Aorta (tissue), 5 donors: ENCODE measurements at regions of chr15 and their contacts with region 1.

Region 1: GRCh38 chr15:70701891-70702568 is 61.3 kb downstream of the UACA start:
- DNase-seq: no peak
- ATAC-seq: peak; percentile 67
- H3K4me3 ChIP-seq: peak overlapping the region; percentile 57 to 93
- H3K27ac ChIP-seq: peak overlapping the region in 1 of 2 donors; percentile 67
- H3K4me1 ChIP-seq: peaks cover 0 to 2% of the 10 kb centered on the region in 2 donors
- H3K27me3 ChIP-seq: no peaks in the 10 kb centered on the region

Region 2: DNA sequence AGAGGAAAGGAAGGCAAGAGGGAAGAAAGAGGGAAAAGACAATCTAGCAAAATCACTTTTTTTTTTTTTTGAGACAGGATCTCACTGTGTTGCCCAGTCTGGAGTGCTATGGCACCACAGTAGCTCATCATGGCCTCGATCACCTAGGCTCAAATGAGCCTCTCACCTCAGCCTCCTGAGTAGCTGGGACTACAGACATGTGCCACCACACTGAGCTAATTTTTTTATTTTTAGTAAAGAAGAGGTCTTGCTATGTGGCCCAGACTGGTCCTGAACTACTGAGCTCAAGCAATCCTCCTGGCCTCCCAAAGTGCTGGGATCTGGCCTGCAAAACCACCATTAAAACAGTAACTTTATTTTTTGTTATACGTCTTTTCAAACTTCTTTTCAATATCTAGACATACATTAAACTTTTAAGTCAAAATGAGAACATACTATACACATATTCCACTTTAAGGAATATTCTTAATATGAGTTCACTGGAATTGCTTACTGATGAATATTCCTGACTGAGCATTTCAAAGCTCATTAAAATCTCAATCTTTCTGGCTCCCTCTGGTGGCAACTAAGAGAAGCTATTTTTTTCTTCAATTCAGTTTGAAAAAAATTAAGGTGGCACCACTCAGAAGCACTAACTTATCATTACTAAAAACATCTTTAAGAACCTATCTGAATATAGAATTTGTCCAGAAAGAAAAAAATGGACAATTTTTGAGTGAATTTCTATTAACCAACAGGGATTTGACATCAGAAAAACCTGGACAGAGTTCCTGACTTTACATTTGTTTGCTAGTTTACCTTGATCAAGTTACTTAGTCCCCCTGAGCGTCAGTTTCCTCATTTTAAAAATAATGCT is 20.5 kb after region 1 on chr15:
- intact Hi-C with region 1: loop called in 1 of 2 experiments (anchors 2 kb)
- DNase-seq: no peak
- ATAC-seq: peak; percentile 60
- H3K4me3 ChIP-seq: no peak overlapping the region
- H3K27ac ChIP-seq: no peak overlapping the region
- H3K4me1 ChIP-seq: peaks cover under 1 to 3% of the 10 kb centered on the region in 2 donors
- H3K27me3 ChIP-seq: no peaks in the 10 kb centered on the region

Region 3: DNA sequence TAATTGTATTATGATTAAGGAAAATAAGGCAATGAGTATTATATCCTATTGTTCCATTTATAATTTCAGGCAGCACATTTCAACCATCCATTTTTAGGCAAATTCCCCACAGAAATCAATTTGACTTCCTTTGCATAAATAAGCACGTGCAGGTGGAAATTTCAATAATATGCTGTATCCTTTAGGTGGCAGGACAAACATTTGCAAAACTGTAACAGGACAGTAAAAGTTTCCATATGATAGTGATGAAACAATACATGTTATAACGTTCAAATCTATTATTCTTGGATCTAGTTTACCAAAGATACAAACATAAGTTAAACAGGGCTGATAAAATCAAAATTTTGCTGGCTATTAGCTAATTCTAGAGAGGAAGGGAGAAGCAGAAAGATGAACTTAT is 52.8 kb after region 1 on chr15:
- intact Hi-C with region 1: no loop called
- DNase-seq: no peak
- ATAC-seq: no peak
- H3K4me3 ChIP-seq: no peak overlapping the region
- H3K27ac ChIP-seq: no peak overlapping the region
- H3K4me1 ChIP-seq: peaks cover 2 to 5% of the 10 kb centered on the region in 2 donors
- H3K27me3 ChIP-seq: no peaks in the 10 kb centered on the region

Region 4: DNA sequence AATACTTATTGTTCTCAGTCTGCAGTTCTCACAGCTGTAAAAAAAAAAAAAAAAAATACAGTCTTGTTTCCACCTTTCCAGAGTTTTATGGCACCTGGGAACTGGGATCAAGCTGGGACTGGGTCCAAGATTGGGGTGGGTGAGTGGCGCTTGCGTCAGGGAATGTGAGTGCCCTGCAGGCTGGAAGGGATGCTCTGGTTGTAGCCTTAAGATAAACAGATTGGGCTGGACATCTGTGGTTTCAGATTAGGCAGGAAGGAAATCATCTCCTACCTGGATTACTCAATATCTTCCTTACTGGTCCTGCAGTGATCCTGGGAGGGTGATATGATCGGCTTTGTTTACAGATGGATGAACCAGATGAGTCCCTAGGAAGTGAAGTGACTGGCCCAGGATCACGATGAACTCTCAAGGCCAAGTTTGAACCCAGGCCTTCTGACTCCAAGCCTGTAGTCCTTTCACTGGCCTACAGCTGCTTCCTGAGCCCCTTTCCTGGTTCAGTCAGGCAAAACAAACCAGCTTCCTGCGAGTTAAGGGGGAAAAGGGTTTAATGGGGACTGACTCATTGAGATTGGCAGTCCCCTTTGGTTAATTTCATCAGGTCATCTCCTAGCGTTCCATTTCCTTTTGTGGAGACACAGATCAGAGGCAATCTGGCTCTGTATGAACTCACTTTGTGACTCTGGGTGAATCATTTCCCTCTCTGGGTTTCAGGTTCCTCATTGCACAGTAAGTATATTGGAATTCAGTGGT is 593.0 kb after region 1 on chr15:
- intact Hi-C with region 1: no loop called
- DNase-seq: no peak
- ATAC-seq: peak; percentile 50
- H3K4me3 ChIP-seq: no peak overlapping the region
- H3K27ac ChIP-seq: peak overlapping the region; percentile 59 to 73
- H3K4me1 ChIP-seq: peaks cover 2 to 4% of the 10 kb centered on the region in 2 donors
- H3K27me3 ChIP-seq: no peaks in the 10 kb centered on the region